K562 (cell line): ENCODE measurements at regions of chr6 and their contacts with region 1.

Region 1: DNA sequence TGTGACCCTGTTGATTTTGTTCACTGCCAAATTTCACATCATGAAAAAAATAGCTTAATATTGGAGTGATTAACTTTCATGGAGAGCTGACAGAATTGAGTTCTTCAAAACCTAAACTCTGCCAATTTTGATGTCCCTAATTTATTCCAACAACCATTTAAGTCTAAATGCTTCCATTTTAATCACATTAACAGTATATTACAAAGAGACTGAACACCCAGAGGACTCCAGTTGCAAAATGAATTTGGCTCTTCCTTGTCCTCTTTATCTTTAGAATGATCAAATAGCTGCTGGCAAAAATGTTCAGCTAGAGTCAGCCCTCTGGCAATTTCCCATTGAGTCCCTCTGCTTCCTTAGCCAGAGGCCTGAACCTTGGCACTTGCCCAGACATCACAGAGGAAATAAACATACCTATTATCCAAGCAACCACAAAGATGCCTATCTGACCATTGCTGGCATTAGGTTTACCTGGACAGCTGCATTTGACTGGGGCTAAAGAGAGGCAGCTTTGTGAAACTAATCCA is 299.0 kb upstream of the STXBP5 start:
- DNase-seq: no peak
- ATAC-seq: no peak
- H3K4me3 ChIP-seq: no peak overlapping the region
- H3K27ac ChIP-seq: no peak overlapping the region
- H3K4me1 ChIP-seq: peaks cover 0 to 37% of the 10 kb centered on the region in 2 experiments; a peak in 4 of 5 replicates
- H3K27me3 ChIP-seq: no peaks in the 10 kb centered on the region
- CTCF ChIP-seq: no peak
- EP300 ChIP-seq: no peak
- POLR2A ChIP-seq: no peak
- RAD21 ChIP-seq: no peak

Region 2: GRCh38 chr6:146892613-146893401 is 12.4 kb before region 1 on chr6:
- CTCF ChIA-PET with region 1: no interaction called
- POLR2A ChIA-PET with region 1: interaction called, 17 read pairs
- in situ Hi-C with region 1: no loop called
- intact Hi-C with region 1: no loop called
- DNase-seq: peak in 3 of 4 experiments; percentile 42 to 90 (median 83)
- ATAC-seq: peak; percentile 62
- H3K4me3 ChIP-seq: peak overlapping the region; percentile 36
- H3K27ac ChIP-seq: peak overlapping the region; percentile 65
- H3K4me1 ChIP-seq: peaks cover 39 to 96% of the 10 kb centered on the region in 2 experiments
- H3K27me3 ChIP-seq: no peaks in the 10 kb centered on the region
- CTCF ChIP-seq: no peak
- EP300 ChIP-seq: peak; percentile 88
- POLR2A ChIP-seq: peak; percentile 73
- RAD21 ChIP-seq: peak; percentile 3 to 36; a peak in 3 of 4 replicates

Region 3: GRCh38 chr6:147000545-147001488 is 95.6 kb after region 1 on chr6:
- CTCF ChIA-PET with region 1: no interaction called
- POLR2A ChIA-PET with region 1: interaction called, 3 read pairs
- in situ Hi-C with region 1: no loop called
- intact Hi-C with region 1: loop called (anchors 5 kb)
- DNase-seq: peak; percentile 27 to 74 (median 48)
- ATAC-seq: peak; percentile 86
- H3K4me3 ChIP-seq: no peak overlapping the region
- H3K27ac ChIP-seq: peak overlapping the region; percentile 30; the same call in 2 of the 3 replicates
- H3K4me1 ChIP-seq: peaks cover 0 to 18% of the 10 kb centered on the region in 2 experiments; a peak in 2 of 5 replicates
- H3K27me3 ChIP-seq: no peaks in the 10 kb centered on the region
- CTCF ChIP-seq: no peak
- EP300 ChIP-seq: no peak
- POLR2A ChIP-seq: no peak
- RAD21 ChIP-seq: peak in 1 of 2 experiments; percentile 11; a peak in 1 of 4 replicates

Region 4: DNA sequence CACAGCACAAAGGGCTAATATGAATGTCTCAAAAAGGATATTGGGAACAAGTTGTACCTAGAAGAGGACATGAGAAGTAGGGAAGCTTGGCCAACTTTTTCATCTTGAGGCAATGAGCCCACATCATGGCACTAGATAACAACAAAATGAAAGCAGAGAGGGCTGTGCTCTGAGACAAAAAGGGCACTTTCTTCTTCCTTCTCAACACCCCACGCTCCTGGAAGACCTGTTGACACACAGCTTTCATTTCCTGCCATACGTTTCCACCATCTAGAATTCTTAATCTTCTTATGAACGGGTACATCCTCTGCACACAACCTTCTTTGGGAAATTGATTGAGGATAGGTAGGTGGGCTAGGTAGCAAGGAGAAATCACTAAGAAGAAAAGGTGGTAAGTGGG is 111.2 kb after region 1 on chr6:
- CTCF ChIA-PET with region 1: interaction called, 4 read pairs
- POLR2A ChIA-PET with region 1: interaction called, 3 read pairs
- in situ Hi-C with region 1: no loop called
- intact Hi-C with region 1: loop called (anchors 5 kb)
- DNase-seq: no peak
- ATAC-seq: peak; percentile 39
- H3K4me3 ChIP-seq: no peak overlapping the region
- H3K27ac ChIP-seq: no peak overlapping the region
- H3K4me1 ChIP-seq: peaks cover 0 to 10% of the 10 kb centered on the region in 2 experiments; a peak in 3 of 5 replicates
- H3K27me3 ChIP-seq: no peaks in the 10 kb centered on the region
- CTCF ChIP-seq: no peak
- EP300 ChIP-seq: no peak
- POLR2A ChIP-seq: no peak
- RAD21 ChIP-seq: no peak

Region 5: DNA sequence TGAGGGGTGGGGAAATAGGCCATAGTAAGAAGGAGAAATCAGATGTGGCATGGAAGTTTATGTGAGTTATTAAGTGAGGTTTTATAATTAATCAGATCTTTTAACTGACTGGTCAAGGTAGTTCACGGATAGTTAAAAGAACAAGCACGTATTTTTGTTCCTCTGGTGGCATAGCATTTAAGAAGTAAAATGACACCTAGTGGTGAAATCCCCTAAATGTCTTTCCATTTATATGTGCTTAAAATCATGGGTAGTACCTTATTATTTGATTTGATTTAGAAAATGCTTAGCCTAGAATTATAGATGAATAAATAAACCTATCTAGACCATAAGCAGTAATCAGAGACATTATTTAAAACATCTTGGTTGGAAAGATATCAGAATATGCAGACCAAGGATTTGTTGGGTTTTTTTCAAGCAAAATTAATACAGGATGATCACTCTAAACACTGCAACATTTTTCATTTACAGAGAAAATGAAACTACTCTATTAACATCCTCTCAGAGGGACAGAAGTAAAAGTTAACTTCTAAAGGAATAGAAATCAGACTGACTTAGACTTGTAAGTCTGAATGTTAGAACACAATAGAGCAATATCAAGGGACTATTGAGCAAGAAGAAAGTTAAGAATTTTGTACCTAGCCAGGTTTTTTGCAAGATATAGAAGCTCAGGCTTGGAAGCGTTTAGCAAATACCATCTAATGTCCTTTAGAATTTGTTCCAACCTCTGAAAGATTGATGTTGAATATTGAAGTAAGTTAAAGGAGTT is 380.0 kb after region 1 on chr6:
- CTCF ChIA-PET with region 1: interaction called, 11 read pairs
- POLR2A ChIA-PET with region 1: no interaction called
- in situ Hi-C with region 1: no loop called
- intact Hi-C with region 1: loop called (anchors 1 kb)
- DNase-seq: peak; percentile 30 to 52 (median 36)
- ATAC-seq: peak; percentile 75
- H3K4me3 ChIP-seq: no peak overlapping the region
- H3K27ac ChIP-seq: no peak overlapping the region
- H3K4me1 ChIP-seq: no peaks in the 10 kb centered on the region
- H3K27me3 ChIP-seq: no peaks in the 10 kb centered on the region
- CTCF ChIP-seq: peak; percentile 19 to 58 (median 32); a peak in 3 of 6 replicates
- EP300 ChIP-seq: no peak
- POLR2A ChIP-seq: no peak
- RAD21 ChIP-seq: peak; percentile 43 to 71; a peak in 3 of 4 replicates